ENCODE measurements at regions of chr5 and their contacts with region 1.

Region 1: DNA sequence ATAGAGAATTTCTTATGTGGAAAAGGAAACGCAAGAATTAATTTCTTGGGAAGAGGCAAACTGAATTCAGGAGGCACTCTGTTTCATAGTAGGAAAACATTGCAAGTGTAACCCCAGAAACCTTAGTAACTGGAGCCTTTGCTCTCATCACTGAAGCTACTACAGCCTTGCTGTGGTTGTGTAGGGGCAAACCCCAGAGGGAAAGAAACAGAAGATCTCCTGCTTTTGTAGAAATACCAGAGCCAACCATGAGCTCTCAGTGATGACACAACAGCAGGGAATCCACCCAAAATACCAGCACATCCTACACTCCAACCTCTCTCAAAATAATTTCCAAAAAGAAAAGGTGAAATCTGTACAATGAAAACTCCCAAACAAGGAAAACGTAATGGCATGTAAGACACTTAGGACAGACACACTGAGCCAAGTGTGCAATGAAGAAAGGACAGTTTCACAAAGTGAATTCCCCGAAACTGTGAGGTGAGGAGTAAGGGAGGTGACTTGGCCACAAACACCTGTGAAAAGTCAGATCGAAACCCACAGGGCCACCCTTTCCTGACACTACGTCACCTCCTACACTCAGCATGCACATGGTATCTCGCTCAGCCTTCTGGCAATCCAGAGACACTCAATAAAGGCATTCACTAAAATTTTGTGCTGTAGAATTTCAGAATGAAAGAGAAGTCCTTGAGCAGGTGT is 8.5 kb upstream of the ACSL6 start:
- DNase-seq: peak; percentile 85
- H3K4me3 Mint-ChIP-seq: peak overlapping the region; percentile 50
- H3K27ac Mint-ChIP-seq: peak overlapping the region; percentile 92
- H3K4me1 Mint-ChIP-seq: peaks cover 51% of the 10 kb centered on the region
- H3K27me3 Mint-ChIP-seq: peaks cover 48% of the 10 kb centered on the region

Region 2: DNA sequence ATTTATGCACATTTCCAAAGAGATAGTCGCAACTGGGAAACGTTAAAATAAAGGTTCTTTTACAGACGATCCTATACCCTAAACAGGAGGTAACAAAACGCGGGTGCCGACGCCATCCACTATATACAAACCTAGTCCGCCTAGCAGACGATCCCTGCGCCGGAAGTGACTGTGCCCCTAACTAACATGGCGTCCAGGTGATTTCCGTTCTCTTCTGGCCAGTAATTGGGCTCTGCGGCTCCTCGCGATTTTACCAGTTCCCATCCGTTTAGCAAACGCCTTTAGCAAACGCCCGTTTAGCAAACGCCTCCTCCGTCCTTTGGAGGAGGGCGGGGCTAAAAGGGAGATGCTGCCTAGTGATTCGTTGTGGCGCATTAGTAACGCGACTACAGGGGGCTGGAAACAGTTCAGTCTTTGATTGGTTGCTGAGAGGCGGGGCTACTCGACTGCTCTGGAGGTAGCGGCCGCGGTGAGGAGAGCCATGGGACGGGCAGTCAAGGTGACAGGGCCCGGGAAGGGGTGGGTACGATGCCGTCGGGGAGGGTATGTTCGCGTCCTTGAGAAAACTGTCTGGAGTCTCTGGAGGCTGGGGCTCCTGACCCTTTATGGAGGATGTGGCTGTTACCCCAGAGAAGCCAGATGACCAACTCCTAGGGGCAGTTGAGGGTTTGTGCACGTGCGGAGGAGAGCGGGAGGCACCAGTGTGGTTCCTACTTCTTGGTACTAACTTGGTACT is 849.3 kb before region 1 on chr5 and contains the start of gene LYRM7:
- intact Hi-C with region 1: loop called (anchors 10 kb)
- DNase-seq: peak; percentile 96
- H3K4me3 Mint-ChIP-seq: peak within 1 kb of the TSS; percentile 99
- H3K27ac Mint-ChIP-seq: peak within 1 kb of the TSS; percentile 98
- H3K4me1 Mint-ChIP-seq: peaks cover 51% of the 10 kb centered on the region
- H3K27me3 Mint-ChIP-seq: no peaks in the 10 kb centered on the region
- total RNA-seq, gene LYRM7: 13.7 and 15.8 TPM in 2 replicates

Region 3: DNA sequence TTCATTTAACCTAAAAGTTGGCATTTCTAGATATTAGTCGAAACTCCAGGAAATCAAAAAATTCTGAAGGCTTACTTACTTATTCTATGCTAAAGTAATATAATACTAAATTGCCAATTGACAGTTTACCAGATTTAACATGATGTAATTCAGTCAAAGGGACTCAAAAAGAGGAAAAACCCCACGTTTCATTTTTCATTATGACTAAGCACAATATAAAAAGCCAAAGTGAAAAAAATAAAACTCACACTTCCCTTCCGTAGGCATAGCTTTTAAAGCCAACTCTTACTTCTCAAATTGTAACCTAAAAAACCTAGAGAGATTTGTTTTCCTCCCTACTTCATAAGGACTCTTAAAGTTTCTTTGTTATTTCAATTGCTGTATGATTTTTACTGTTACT is 531.5 kb before region 1 on chr5:
- intact Hi-C with region 1: loop called (anchors 2 kb)
- DNase-seq: no peak
- H3K4me3 Mint-ChIP-seq: no peak overlapping the region
- H3K27ac Mint-ChIP-seq: no peak overlapping the region
- H3K4me1 Mint-ChIP-seq: peaks cover 16% of the 10 kb centered on the region
- H3K27me3 Mint-ChIP-seq: no peaks in the 10 kb centered on the region

Region 4: GRCh38 chr5:131854134-131854533 is 165.9 kb before region 1 on chr5:
- intact Hi-C with region 1: loop called (anchors 1 kb)
- DNase-seq: peak; percentile 6
- H3K4me3 Mint-ChIP-seq: peak overlapping the region; percentile 24
- H3K27ac Mint-ChIP-seq: peak overlapping the region; percentile 10
- H3K4me1 Mint-ChIP-seq: peaks cover 28% of the 10 kb centered on the region
- H3K27me3 Mint-ChIP-seq: peaks cover 5% of the 10 kb centered on the region

Region 5: GRCh38 chr5:132037353-132037752 is 17.3 kb after region 1 on chr5:
- intact Hi-C with region 1: loop called (anchors 1 kb)
- DNase-seq: no peak
- H3K4me3 Mint-ChIP-seq: no peak overlapping the region
- H3K27ac Mint-ChIP-seq: peak overlapping the region; percentile 42
- H3K4me1 Mint-ChIP-seq: peaks cover 30% of the 10 kb centered on the region
- H3K27me3 Mint-ChIP-seq: peaks cover 55% of the 10 kb centered on the region